AG04450 (cell line): ENCODE measurements at regions of chr20 and their contacts with region 1.

Region 1: GRCh38 chr20:21505161-21505809 is 8.6 kb downstream of the NKX2-2 start:
- DNase-seq: no peak
- H3K4me3 ChIP-seq: peak overlapping the region; percentile 48; the same call in 1 of the 2 replicates
- H3K27ac ChIP-seq: no peak overlapping the region
- H3K27me3 ChIP-seq: peaks cover 45% of the 10 kb centered on the region
- CTCF ChIP-seq: peak; percentile 97

Region 2: GRCh38 chr20:21228511-21228910 is 276.8 kb before region 1 on chr20:
- CTCF ChIA-PET with region 1: interaction called, 16 read pairs
- POLR2A ChIA-PET with region 1: no interaction called
- DNase-seq: no peak
- H3K4me3 ChIP-seq: no peak overlapping the region
- H3K27ac ChIP-seq: no peak overlapping the region
- H3K27me3 ChIP-seq: no peaks in the 10 kb centered on the region
- CTCF ChIP-seq: no peak

Region 3: GRCh38 chr20:21272279-21272678 is 233.0 kb before region 1 on chr20:
- CTCF ChIA-PET with region 1: no interaction called
- POLR2A ChIA-PET with region 1: no interaction called
- DNase-seq: no peak
- H3K4me3 ChIP-seq: no peak overlapping the region
- H3K27ac ChIP-seq: no peak overlapping the region
- H3K27me3 ChIP-seq: peaks cover 7% of the 10 kb centered on the region
- CTCF ChIP-seq: no peak

Region 4: DNA sequence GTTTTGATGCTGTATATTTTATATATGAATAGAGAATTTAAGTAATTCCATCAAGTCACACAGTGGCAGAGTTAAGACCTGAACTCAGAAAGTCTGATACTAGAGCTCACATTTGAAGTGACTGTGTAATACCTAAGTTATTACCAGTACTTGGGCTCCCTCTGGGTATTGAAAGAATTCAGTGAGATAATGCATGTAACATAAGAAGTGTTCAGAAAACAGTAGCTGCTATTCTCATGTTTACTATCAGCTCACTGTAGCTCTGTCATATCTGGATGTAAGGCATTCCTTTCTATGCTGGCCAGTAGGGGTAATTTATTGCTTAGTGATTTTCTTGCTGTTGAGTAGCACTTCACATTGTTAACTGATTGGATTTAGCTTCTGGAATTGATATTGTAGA is 152.6 kb before region 1 on chr20:
- CTCF ChIA-PET with region 1: interaction called, 12 read pairs
- POLR2A ChIA-PET with region 1: no interaction called
- DNase-seq: peak; percentile 32
- H3K4me3 ChIP-seq: no peak overlapping the region
- H3K27ac ChIP-seq: no peak overlapping the region
- H3K27me3 ChIP-seq: no peaks in the 10 kb centered on the region
- CTCF ChIP-seq: 0 out of 2 replicates have a peak, but pooled peaks have one; percentile 18

Region 5: DNA sequence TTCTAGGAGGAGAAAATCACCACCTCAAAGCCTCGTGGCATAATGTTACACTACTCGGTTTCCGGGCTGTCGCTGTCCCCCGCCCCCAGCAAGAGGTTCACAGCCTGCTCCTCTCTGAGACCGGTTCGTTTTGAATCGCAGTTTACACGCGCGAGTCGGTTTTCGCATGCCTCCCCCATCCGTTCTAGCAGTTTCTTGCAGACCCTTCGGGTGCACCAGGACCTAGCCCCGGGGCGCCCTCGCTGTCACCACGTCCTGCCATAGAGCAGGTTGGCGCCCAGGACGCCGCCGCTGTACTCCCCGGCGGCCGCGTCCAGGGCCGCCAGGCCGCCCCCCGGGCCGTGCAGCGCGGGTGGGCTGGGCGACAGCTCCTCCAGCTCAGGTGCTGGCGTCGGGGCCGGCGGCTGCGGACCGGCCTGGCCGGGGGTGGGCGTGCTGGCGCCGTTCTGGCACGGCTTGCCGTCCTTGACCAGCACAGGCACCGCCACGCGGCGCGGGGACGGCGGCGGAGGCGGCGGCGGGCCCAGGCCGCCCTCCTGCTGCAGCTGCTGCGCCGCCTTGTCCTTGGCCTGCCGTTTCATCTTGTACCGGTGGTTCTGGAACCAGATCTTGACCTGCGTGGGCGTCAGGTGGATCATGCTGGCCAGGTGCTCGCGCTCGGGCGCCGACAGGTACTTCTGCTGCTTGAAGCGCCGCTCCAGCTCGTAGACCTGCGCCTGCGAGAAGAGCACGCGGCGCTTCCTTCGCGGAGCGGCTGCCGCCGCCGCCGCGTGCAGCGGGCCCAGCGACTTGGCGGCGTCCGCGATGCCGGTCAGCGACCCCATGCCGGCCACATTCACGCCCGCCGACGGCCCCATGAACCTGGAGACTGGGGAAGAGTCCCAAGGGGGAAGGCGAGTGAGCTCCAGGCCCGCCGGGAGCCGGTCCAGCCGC is 109.4 kb before region 1 on chr20:
- CTCF ChIA-PET with region 1: no interaction called
- POLR2A ChIA-PET with region 1: no interaction called
- DNase-seq: no peak
- H3K4me3 ChIP-seq: no peak overlapping the region
- H3K27ac ChIP-seq: no peak overlapping the region
- H3K27me3 ChIP-seq: peaks cover 68% of the 10 kb centered on the region
- CTCF ChIP-seq: no peak

Region 6: GRCh38 chr20:21490095-21490494 is 15.2 kb before region 1 on chr20:
- CTCF ChIA-PET with region 1: interaction called, 13 read pairs
- POLR2A ChIA-PET with region 1: no interaction called
- DNase-seq: no peak
- H3K4me3 ChIP-seq: no peak overlapping the region
- H3K27ac ChIP-seq: no peak overlapping the region
- H3K27me3 ChIP-seq: peaks cover 4% of the 10 kb centered on the region
- CTCF ChIP-seq: peak; percentile 53

Region 7: GRCh38 chr20:21936720-21937380 is 431.6 kb after region 1 on chr20:
- CTCF ChIA-PET with region 1: no interaction called
- POLR2A ChIA-PET with region 1: no interaction called
- DNase-seq: no peak
- H3K4me3 ChIP-seq: no peak overlapping the region
- H3K27ac ChIP-seq: no peak overlapping the region
- H3K27me3 ChIP-seq: no peaks in the 10 kb centered on the region
- CTCF ChIP-seq: no peak